ENCODE measurements at regions of chr12 and their contacts with region 1.

Region 1: DNA sequence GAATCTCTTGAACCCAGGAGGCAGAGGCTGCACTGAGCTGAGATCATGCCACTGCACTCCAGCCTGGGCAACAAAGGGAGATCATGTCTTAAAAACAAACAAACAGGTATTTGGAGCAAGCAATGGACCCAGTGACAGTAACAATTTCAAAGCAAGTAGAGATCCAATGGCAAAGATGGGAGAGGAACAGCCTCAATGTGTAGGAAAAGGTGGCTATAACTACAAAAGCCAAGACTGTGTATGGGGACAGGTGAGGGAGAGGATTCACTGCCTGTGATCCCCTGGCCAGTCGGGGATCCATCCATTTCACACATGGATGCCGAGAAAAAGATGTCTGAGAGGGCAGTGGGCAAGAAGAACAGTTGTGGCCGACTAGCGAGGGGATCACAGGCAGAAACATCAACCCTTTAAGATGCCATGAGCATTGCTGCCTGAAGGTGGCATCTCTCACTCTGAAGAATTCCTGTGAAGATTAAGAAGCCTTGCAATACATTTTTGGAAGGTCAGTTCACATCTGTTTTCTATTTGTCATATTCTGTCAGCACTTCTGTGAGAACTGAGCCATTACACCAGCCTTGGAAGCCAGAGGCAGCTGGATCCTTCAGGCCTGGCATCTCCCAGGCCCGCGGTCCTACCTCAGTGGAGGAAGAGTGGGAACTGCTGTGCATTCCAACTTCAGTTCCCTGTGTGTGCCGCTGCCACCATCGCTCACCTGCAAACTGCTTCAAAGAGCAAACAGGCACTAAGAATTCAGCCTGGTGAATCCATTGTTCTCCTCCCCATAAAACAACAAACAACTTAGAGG is 54.5 kb upstream of the FRS2 start:
- DNase-seq: peak in 1 of 2 donors; percentile 85
- H3K4me3 ChIP-seq: peak overlapping the region in 1 of 2 donors; percentile 34
- H3K27ac ChIP-seq: peak overlapping the region in 1 of 2 donors; percentile 2
- H3K4me1 ChIP-seq: peaks cover 0 to 7% of the 10 kb centered on the region in 2 donors
- H3K27me3 ChIP-seq: no peaks in the 10 kb centered on the region
- CTCF ChIP-seq: peak; percentile 52 to 68 (median 67)

Region 2: DNA sequence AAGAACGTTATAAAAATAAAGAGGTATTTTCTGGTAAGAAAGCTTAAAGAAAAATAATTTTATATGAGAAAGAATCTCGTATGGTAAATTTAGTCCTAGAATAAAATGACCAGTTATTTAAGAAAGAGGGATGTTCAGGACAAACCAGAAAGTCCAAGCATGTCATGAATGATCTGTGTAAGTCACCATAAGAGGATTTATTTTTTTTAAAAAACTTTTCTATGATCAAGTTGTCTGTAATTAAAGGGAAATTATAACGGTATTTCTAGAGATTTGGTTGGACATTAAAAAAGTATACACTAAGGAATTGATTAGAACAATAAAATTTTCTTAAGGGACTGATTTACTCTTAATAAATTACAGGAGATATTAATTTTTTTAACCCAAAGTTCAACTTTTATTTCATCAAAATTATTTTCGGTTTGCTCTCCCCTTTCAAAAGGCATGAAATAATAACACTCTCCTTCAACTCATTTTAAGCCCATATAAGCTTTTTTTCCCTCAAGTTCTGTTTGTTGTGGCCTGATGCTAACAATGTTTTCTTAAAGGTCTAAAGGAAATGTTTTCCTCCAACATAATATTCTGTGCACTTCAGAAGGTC is 226.2 kb before region 1 on chr12:
- intact Hi-C with region 1: no loop called
- DNase-seq: no peak
- H3K4me3 ChIP-seq: no peak overlapping the region
- H3K27ac ChIP-seq: no peak overlapping the region
- H3K4me1 ChIP-seq: no peaks in the 10 kb centered on the region
- H3K27me3 ChIP-seq: no peaks in the 10 kb centered on the region
- CTCF ChIP-seq: no peak

Region 3: GRCh38 chr12:69435644-69436043 is 20.0 kb after region 1 on chr12:
- intact Hi-C with region 1: loop called (anchors 2 kb)
- DNase-seq: no peak
- H3K4me3 ChIP-seq: no peak overlapping the region
- H3K27ac ChIP-seq: peak overlapping the region; percentile 75 to 82
- H3K4me1 ChIP-seq: peaks cover 6 to 28% of the 10 kb centered on the region in 2 donors
- H3K27me3 ChIP-seq: no peaks in the 10 kb centered on the region
- CTCF ChIP-seq: no peak

Region 4: DNA sequence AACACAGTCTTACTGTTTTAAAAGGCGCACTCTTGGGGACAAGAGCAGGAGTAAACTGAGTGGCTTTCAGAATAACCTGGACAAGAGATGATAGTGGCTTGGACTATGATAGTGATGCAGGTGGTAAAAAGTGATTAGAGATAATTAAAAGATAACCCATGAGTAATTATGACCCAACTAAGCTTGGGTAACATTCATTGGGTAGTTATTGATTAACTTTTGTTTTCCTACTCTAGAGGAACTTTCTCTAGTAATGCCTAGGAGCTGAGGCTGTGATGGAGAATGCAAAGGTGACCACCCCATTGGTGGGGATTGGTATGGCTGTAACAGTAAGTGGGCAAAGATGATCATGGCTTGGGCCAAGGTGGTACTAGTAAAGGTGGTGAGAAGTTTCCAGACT is 32.2 kb after region 1 on chr12:
- intact Hi-C with region 1: no loop called
- DNase-seq: no peak
- H3K4me3 ChIP-seq: no peak overlapping the region
- H3K27ac ChIP-seq: no peak overlapping the region
- H3K4me1 ChIP-seq: no peaks in the 10 kb centered on the region
- H3K27me3 ChIP-seq: no peaks in the 10 kb centered on the region
- CTCF ChIP-seq: no peak

Region 5: DNA sequence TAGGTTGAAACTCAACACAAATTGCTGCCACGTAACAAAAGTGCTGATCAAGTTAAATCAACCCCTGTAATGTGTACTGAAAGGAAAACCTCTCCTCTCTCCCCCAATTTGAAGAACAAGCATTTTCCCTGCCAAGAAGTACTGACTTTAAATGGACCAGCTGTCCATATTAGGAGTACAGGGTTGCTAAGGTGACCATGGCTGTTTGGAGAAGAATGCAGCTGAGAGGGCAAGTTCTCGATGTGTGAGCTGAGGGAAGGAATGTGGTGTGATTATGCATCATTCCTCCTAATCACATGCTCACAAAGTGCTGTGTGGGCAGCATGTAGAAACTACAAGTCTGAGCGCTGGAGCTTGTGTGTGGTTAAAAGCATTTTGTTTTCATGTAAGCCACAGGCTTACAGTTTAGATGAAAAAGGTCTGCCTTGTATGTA is 118.7 kb after region 1 on chr12:
- intact Hi-C with region 1: loop called (anchors 5 kb)
- DNase-seq: peak; percentile 25 to 89
- H3K4me3 ChIP-seq: peak overlapping the region in 1 of 2 donors; percentile 29
- H3K27ac ChIP-seq: peak overlapping the region; percentile 47 to 69
- H3K4me1 ChIP-seq: peaks cover 0 to 6% of the 10 kb centered on the region in 2 donors
- H3K27me3 ChIP-seq: no peaks in the 10 kb centered on the region
- CTCF ChIP-seq: no peak

Region 6: GRCh38 chr12:69570545-69571399 is 155.1 kb after region 1 on chr12:
- intact Hi-C with region 1: loop called (anchors 1 kb)
- DNase-seq: peak in 1 of 2 donors; percentile 73
- H3K4me3 ChIP-seq: no peak overlapping the region
- H3K27ac ChIP-seq: no peak overlapping the region
- H3K4me1 ChIP-seq: no peaks in the 10 kb centered on the region
- H3K27me3 ChIP-seq: no peaks in the 10 kb centered on the region
- CTCF ChIP-seq: peak; percentile 59 to 79 (median 76)

Region 7: GRCh38 chr12:69655377-69656336 is 240.0 kb after region 1 on chr12:
- intact Hi-C with region 1: no loop called
- DNase-seq: no peak
- H3K4me3 ChIP-seq: no peak overlapping the region
- H3K27ac ChIP-seq: no peak overlapping the region
- H3K4me1 ChIP-seq: peaks cover 0 to 4% of the 10 kb centered on the region in 2 donors
- H3K27me3 ChIP-seq: no peaks in the 10 kb centered on the region
- CTCF ChIP-seq: no peak